Natural killer cell (primary cell): ENCODE measurements at regions of chr9 and their contacts with region 1.

Region 1: DNA sequence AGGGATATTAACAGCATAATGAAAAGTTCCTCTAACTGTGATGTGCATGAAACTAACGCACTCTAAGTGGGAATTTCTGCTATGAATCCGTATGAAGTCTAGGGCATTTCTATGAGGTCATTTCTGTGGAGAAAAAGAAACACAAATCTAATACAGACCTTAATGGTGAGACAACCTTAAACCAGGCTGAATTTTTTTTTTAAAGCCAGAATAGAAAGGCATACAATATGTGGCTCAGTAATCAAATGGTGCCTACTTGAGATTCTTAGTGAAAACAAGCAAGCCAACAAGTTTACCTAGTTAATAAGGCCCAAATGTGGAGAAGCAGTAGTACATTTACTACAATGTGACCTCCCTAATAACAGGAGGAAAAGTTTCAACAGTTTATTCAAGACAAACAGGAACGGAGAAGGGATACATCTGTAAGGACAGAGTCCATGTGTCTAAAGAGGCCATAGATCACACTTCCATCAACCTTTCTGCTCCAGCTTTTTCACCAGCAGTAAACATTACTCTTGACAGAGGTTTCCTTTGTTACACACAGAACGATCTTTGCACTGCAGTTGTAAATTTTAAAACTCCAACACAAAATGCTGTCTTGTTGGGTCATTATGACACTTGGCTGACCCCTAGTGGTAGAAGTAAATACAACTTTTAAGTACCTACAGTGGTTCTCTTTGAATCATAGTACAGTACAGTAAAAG is 26.2 kb downstream of the CARNMT1 start:
- DNase-seq: peak in 1 of 2 donors; percentile 89
- ATAC-seq: peak; percentile 90 to 99 (median 99)
- H3K4me3 ChIP-seq: no peak overlapping the region
- H3K4me3 Mint-ChIP-seq: no peak overlapping the region
- H3K27ac ChIP-seq: no peak overlapping the region
- H3K27ac Mint-ChIP-seq: no peak overlapping the region
- H3K4me1 ChIP-seq: no peaks in the 10 kb centered on the region
- H3K4me1 Mint-ChIP-seq: peaks cover 0 to 10% of the 10 kb centered on the region in 2 donors
- H3K27me3 ChIP-seq: no peaks in the 10 kb centered on the region
- H3K27me3 Mint-ChIP-seq: no peaks in the 10 kb centered on the region
- CTCF ChIP-seq: peak; percentile 88

Region 2: GRCh38 chr9:74773886-74774479 is 227.9 kb before region 1 on chr9:
- intact Hi-C with region 1: loop called (anchors 1 kb)
- DNase-seq: peak; percentile 61 to 84
- ATAC-seq: peak; percentile 75 to 87 (median 83)
- H3K4me3 ChIP-seq: no peak overlapping the region
- H3K4me3 Mint-ChIP-seq: no peak overlapping the region
- H3K27ac ChIP-seq: no peak overlapping the region
- H3K27ac Mint-ChIP-seq: no peak overlapping the region
- H3K4me1 ChIP-seq: no peaks in the 10 kb centered on the region
- H3K4me1 Mint-ChIP-seq: no peaks in the 10 kb centered on the region
- H3K27me3 ChIP-seq: peaks cover 3% of the 10 kb centered on the region
- H3K27me3 Mint-ChIP-seq: peaks cover 13 to 18% of the 10 kb centered on the region in 2 donors
- CTCF ChIP-seq: peak; percentile 98

Region 3: GRCh38 chr9:74810200-74810599 is 191.7 kb before region 1 on chr9:
- intact Hi-C with region 1: no loop called
- DNase-seq: no peak
- ATAC-seq: no peak
- H3K4me3 ChIP-seq: no peak overlapping the region
- H3K4me3 Mint-ChIP-seq: no peak overlapping the region
- H3K27ac ChIP-seq: no peak overlapping the region
- H3K27ac Mint-ChIP-seq: no peak overlapping the region
- H3K4me1 ChIP-seq: no peaks in the 10 kb centered on the region
- H3K4me1 Mint-ChIP-seq: no peaks in the 10 kb centered on the region
- H3K27me3 ChIP-seq: peaks cover 2% of the 10 kb centered on the region
- H3K27me3 Mint-ChIP-seq: peaks cover 22 to 65% of the 10 kb centered on the region in 2 donors
- CTCF ChIP-seq: no peak

Region 4: DNA sequence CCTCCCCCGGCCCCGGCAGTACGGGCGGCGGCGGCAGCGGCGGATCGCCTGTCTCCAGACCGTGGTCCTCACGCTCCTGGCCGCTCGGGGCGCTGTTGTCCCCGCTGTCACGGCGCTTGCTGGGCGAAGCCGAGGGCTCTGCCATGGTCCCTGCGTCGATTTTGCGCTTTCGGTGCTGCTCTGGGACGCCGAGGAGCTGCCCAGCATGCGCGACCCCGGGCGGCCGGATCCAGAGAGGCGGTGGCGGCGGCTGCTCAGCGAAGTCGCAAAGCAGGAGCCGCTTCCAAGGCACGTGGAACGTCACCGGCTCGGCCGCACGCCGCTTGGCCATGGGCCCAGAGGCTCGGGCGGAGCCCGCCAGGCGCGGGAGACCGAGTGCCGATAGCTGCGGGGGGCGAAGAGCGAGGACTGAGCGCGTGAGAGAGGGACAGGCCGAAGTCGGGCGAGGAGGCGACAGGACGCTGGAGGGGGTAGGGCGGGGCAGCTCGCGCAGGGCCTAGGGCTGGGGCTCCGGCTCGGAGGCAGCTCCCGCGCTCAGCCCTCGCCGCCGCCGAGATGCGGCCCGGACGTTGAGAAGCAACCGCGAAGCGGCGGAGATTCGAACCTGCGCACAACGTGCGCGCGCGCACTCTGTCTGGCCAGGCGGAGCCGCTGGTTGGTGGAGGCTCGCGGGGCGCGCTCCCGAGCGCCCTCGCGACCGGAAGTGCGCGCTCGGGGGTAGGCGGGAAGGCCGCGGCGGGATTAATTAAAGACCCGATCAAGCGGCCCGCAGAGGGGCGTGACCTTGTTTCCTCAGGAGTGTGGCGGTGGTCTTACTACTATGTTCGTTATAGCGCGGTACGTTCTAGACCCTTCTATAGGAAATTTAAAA is 49.4 kb before region 1 on chr9 and contains the start of gene C9orf40:
- intact Hi-C with region 1: loop called (anchors 2 kb)
- DNase-seq: peak; percentile 89 to 94
- ATAC-seq: peak; percentile 90 to 97 (median 90)
- H3K4me3 ChIP-seq: peak within 1 kb of the TSS; percentile 81
- H3K4me3 Mint-ChIP-seq: peak within 1 kb of the TSS; percentile 98
- H3K27ac ChIP-seq: peak within 1 kb of the TSS; percentile 85
- H3K27ac Mint-ChIP-seq: peak within 1 kb of the TSS; percentile 92 to 97
- H3K4me1 ChIP-seq: peaks cover 13% of the 10 kb centered on the region
- H3K4me1 Mint-ChIP-seq: peaks cover 18 to 26% of the 10 kb centered on the region in 2 donors
- H3K27me3 ChIP-seq: no peaks in the 10 kb centered on the region
- H3K27me3 Mint-ChIP-seq: no peaks in the 10 kb centered on the region
- CTCF ChIP-seq: peak; percentile 76
- total RNA-seq, gene C9orf40: 1.8 to 3.9 (median 3.6) TPM

Region 5: GRCh38 chr9:75071530-75072124 is 69.8 kb after region 1 on chr9:
- intact Hi-C with region 1: loop called (anchors 5 kb)
- DNase-seq: peak in 1 of 2 donors; percentile 68
- ATAC-seq: no peak
- H3K4me3 ChIP-seq: no peak overlapping the region
- H3K4me3 Mint-ChIP-seq: no peak overlapping the region
- H3K27ac ChIP-seq: no peak overlapping the region
- H3K27ac Mint-ChIP-seq: peak overlapping the region; percentile 3 to 71
- H3K4me1 ChIP-seq: peaks cover 5% of the 10 kb centered on the region
- H3K4me1 Mint-ChIP-seq: peaks cover 7 to 16% of the 10 kb centered on the region in 2 donors
- H3K27me3 ChIP-seq: no peaks in the 10 kb centered on the region
- H3K27me3 Mint-ChIP-seq: no peaks in the 10 kb centered on the region
- CTCF ChIP-seq: no peak